Sigmoid colon (tissue), 7 donors: ENCODE measurements at regions of chr6 and their contacts with region 1.

Region 1: GRCh38 chr6:77457720-77458349 is 5.5 kb downstream of the HTR1B start:
- DNase-seq: peak; percentile 62
- H3K4me3 ChIP-seq: no peak overlapping the region
- H3K27ac ChIP-seq: peak overlapping the region in 1 of 4 donors; percentile 35
- H3K4me1 ChIP-seq: peaks cover 0 to 5% (median under 1%) of the 10 kb centered on the region in 4 donors
- H3K27me3 ChIP-seq: peaks cover 0 to 33% (median 11%) of the 10 kb centered on the region in 3 donors
- CTCF ChIP-seq: peak in 3 of 4 experiments; percentile 31 to 60 (median 39)
- EP300 ChIP-seq: no peak
- POLR2A ChIP-seq: no peak

Region 2: DNA sequence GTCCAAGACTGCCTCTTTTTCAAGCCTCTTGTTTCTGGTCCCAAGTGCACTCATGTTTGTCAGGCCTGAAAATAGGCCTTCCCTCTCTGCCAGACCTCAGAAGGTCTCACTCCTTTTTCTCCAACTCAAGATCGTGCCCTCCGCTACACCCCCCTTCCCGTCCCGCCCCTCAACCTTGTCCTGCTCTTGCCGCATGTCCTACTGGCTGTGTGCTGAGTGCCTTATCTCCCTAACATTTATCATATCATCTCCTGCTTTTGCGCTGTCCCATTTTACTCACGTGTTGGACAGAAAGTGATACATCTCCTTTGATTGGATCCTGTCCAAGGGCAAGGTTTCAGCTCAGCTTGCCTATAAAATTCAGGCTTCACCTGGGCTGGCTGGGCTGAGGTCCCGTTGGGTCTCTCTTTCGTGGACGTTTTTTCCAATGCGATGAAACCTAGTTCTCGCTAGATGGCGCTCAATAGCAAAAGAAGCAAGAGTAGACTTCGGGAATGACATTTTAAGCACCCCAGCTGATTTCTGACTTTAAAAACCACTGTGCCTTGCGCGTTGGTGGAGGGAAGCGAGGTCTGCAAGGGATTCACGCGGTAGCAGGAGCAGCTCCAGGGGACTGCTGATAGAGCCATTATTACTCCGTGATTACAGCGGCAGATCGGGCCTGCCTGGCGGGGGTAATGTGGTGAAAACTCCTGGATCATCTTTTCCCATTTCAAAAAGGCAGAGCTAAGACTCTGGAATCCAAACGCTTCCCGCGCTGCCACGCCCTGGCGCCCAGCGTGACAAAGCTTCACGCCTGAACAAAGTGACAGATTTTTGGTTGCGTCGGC is 1523.0 kb before region 1 on chr6:
- intact Hi-C with region 1: loop called (anchors 10 kb)
- DNase-seq: peak; percentile 65
- H3K4me3 ChIP-seq: peak overlapping the region in 3 of 4 donors; percentile 32 to 43 (median 41)
- H3K27ac ChIP-seq: no peak overlapping the region
- H3K4me1 ChIP-seq: peaks cover 0 to 6% (median 5%) of the 10 kb centered on the region in 4 donors
- H3K27me3 ChIP-seq: no peaks in the 10 kb centered on the region
- CTCF ChIP-seq: peak; percentile 27 to 69 (median 52)
- EP300 ChIP-seq: no peak
- POLR2A ChIP-seq: no peak

Region 3: DNA sequence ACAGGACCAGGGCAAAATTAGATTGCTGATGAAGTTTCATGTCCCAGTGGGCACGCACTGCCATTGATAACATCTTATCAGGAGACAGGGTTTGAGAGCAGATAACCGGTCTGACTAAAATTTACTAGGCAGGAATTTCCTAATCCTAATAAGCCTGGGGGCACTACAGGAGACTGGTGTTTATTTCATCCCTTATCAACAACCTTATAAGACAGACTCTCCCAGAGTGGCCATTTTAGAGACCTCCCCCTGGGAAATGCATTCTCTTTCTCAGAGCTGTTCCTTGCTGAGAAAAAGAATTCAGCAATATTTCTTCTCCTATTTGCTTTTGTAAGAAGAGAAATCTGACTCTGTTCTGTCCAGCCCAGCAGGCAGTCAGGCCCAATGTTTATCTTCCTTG is 961.9 kb before region 1 on chr6:
- intact Hi-C with region 1: no loop called
- DNase-seq: no peak
- H3K4me3 ChIP-seq: no peak overlapping the region
- H3K27ac ChIP-seq: no peak overlapping the region
- H3K4me1 ChIP-seq: no peaks in the 10 kb centered on the region
- H3K27me3 ChIP-seq: no peaks in the 10 kb centered on the region
- CTCF ChIP-seq: no peak
- EP300 ChIP-seq: no peak
- POLR2A ChIP-seq: no peak